Caco-2 (cell line): ENCODE measurements at regions of chr16 and their contacts with region 1.

Region 1: GRCh38 chr16:68902008-68902968 is 59.0 kb downstream of the TANGO6 start:
- DNase-seq: peak; percentile 57 to 79
- H3K4me3 ChIP-seq: no peak overlapping the region
- H3K4me3 Mint-ChIP-seq: no peak overlapping the region
- H3K27ac Mint-ChIP-seq: peak overlapping the region; percentile 29
- H3K4me1 ChIP-seq: peaks cover 12% of the 10 kb centered on the region
- H3K4me1 Mint-ChIP-seq: peaks cover 14% of the 10 kb centered on the region
- H3K27me3 ChIP-seq: no peaks in the 10 kb centered on the region
- H3K27me3 Mint-ChIP-seq: no peaks in the 10 kb centered on the region
- CTCF ChIP-seq: peak; percentile 73 to 87

Region 2: DNA sequence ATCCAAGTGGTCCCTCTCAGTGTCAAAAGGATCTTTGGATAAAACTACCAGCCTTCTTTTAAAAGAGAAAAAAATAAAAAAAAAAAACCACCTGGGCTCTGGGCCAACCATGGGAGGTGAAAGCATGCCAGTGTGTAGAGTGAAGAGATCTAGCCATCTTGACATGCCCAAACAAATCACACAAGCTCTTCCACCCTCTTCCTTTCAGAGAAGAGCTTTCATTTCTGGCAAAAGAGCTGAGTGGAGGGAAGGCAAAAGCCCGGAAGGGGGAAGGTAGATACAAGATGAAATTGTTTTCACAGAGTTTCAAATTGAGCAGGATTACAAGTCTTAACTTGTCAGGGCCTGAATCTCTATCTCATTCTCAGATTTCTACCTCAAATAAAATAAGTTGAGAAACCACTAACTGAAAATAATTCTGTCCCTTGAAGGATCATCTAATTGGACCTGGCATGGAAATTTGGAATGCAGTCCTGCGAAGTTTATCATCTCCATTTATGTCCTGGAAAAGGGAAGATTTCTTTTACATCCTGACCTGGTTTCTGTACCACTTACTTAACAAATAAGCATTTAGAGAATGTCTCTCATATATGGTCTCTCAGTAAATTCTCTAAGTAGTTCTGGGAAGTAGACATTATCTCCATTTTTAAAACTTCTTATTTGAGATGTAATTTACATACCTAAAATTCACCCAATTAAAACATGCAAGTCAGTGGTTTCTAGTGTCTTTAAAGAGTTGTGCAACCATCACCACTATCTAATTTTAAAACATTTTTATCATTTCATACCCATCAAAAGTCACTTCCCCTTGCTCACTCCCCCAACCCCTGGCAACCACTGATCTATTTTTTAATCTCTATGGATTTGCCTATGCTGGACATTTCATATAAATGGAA is 34.7 kb after region 1 on chr16:
- CTCF ChIA-PET with region 1: no interaction called
- POLR2A ChIA-PET with region 1: no interaction called
- intact Hi-C with region 1: no loop called
- DNase-seq: no peak
- H3K4me3 ChIP-seq: no peak overlapping the region
- H3K4me3 Mint-ChIP-seq: no peak overlapping the region
- H3K27ac Mint-ChIP-seq: no peak overlapping the region
- H3K4me1 ChIP-seq: no peaks in the 10 kb centered on the region
- H3K4me1 Mint-ChIP-seq: no peaks in the 10 kb centered on the region
- H3K27me3 ChIP-seq: no peaks in the 10 kb centered on the region
- H3K27me3 Mint-ChIP-seq: no peaks in the 10 kb centered on the region
- CTCF ChIP-seq: no peak

Region 3: DNA sequence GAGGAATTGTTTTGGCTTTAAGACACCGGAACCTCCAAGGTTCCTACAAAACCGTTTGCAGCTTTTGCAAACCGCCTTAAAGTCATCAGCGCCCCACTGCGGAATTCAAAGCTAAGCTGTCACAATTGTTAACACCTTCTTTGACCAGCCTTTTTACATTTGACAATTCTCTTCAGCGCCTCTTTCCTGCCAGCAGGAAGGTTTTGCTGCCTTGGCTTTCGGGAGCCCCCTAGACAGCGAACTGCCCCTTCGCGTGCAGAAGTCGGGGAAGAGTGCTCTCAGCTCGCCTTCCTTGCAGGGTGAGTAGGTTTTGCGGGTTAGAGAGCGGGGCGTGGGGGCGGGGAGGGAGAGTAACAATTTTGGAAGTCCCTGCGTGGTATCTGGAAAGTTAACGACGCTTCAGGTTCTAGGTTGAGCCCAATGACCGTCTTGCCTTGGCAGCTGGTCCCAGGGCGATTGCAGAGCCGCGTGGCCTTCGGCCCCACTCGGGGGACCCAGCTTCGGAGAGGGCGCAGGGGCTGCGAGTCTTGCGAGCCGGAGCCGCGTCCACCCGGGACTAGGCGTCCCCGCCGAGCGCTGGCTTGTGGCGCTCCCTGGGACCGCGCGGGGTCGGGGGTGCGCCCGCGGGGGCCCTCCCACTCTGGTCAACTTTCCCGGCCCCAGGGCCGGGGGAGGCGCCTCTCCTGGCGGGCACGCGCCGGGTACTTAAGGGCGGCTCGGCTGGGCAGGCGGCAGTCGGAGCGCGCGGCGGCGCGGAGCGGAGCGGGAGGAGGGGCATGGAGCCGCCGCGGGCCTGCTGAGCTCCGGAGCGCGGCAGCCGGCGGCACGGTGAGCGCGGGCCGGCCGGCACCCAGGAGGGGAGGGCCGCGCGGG is 203.4 kb after region 1 on chr16 and contains the start of gene HAS3:
- CTCF ChIA-PET with region 1: interaction called, 9 read pairs
- POLR2A ChIA-PET with region 1: no interaction called
- intact Hi-C with region 1: loop called (anchors 1 kb)
- DNase-seq: peak; percentile 73 to 89
- H3K4me3 ChIP-seq: peak within 1 kb of the TSS; percentile 50
- H3K4me3 Mint-ChIP-seq: peak within 1 kb of the TSS; percentile 92
- H3K27ac Mint-ChIP-seq: peak within 1 kb of the TSS; percentile 61
- H3K4me1 ChIP-seq: peaks cover 9% of the 10 kb centered on the region
- H3K4me1 Mint-ChIP-seq: peaks cover 20% of the 10 kb centered on the region
- H3K27me3 ChIP-seq: no peaks in the 10 kb centered on the region
- H3K27me3 Mint-ChIP-seq: no peaks in the 10 kb centered on the region
- CTCF ChIP-seq: peak; percentile 33 to 60
- total RNA-seq, gene HAS3: 8.3 TPM in 2 replicates

Region 4: DNA sequence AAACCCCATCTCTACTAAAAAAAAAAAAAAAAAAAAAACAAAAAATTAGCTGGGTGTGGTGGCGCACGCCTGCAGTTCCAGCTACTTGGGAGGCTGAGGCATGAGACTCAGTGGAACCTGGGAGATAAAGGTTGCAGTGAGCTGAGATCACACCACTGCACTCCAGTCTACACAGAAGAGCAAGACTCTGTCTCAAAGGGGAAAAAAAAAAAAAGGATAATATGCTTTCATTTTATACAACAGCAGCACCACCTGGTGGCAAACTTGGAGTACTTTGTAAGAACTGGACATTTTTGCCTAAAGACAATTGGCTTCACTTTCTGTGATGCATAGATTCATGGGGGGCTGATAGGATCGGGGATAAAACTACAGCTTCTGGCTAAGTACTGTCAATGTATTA is 221.6 kb after region 1 on chr16:
- CTCF ChIA-PET with region 1: interaction called, 10 read pairs
- POLR2A ChIA-PET with region 1: no interaction called
- intact Hi-C with region 1: loop called (anchors 1 kb)
- DNase-seq: peak; percentile 69 to 79
- H3K4me3 ChIP-seq: no peak overlapping the region
- H3K4me3 Mint-ChIP-seq: no peak overlapping the region
- H3K27ac Mint-ChIP-seq: no peak overlapping the region
- H3K4me1 ChIP-seq: no peaks in the 10 kb centered on the region
- H3K4me1 Mint-ChIP-seq: no peaks in the 10 kb centered on the region
- H3K27me3 ChIP-seq: no peaks in the 10 kb centered on the region
- H3K27me3 Mint-ChIP-seq: no peaks in the 10 kb centered on the region
- CTCF ChIP-seq: peak; percentile 67 to 83